MCF 10A (cell line): ENCODE measurements at regions of chr9 and their contacts with region 1.

Region 1: GRCh38 chr9:85715587-85715986 is 26.2 kb downstream of the AGTPBP1 start:
- DNase-seq: peak; percentile 1
- H3K4me3 Mint-ChIP-seq: no peak overlapping the region
- H3K27ac Mint-ChIP-seq: no peak overlapping the region
- H3K4me1 Mint-ChIP-seq: peaks cover 7% of the 10 kb centered on the region
- H3K27me3 Mint-ChIP-seq: no peaks in the 10 kb centered on the region
- CTCF ChIP-seq: no peak

Region 2: DNA sequence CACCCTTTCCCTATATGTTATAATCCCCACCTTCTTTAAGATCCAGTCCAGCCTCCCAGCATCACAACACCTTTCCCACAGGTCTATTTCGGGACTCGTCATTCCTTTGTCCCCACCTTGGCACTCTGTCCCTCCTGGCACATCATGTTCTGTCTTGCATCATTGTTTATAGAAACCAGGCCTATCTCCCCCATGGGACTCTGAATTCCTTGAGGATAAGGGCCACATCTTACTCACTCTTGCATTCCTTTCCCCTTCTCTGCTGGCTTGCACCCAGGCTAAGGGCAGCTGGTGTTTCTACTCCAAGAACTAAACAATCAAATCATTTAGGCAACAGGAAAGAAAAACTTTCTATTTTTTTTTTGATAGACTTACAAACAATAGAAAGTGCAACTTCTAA is 179.5 kb before region 1 on chr9:
- CTCF ChIA-PET with region 1: no interaction called
- POLR2A ChIA-PET with region 1: no interaction called
- intact Hi-C with region 1: no loop called
- DNase-seq: peak; percentile 87
- H3K4me3 Mint-ChIP-seq: no peak overlapping the region
- H3K27ac Mint-ChIP-seq: peak overlapping the region; percentile 26
- H3K4me1 Mint-ChIP-seq: peaks cover 11% of the 10 kb centered on the region
- H3K27me3 Mint-ChIP-seq: no peaks in the 10 kb centered on the region
- CTCF ChIP-seq: no peak

Region 3: DNA sequence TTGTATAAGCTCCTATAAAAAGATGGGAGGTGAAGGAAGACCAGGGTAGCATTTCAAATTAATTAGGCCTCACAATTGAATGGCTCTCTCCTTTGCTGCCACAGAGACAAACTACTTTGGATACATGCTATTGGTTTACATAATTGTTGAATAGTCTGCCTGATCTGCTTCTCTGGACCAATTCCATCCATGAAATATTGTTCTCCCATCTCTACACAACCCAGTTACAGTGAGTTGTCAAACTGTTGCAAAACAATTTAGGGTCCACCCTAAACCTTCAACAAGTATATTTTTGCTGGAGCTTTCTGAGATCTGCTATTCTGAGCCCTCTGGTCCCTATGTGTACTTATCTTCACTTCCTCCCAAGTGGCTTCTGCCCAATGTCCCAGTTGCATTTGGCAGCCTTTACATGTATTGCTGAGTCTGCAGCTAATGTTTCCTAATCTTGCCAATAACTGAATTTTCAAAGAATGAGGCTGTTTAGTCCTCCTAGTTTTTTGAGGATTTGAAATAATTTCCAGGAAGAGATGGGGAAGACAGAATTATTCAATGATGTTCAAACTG is 12.8 kb before region 1 on chr9:
- CTCF ChIA-PET with region 1: interaction called, 11 read pairs
- POLR2A ChIA-PET with region 1: no interaction called
- intact Hi-C with region 1: no loop called
- DNase-seq: no peak
- H3K4me3 Mint-ChIP-seq: no peak overlapping the region
- H3K27ac Mint-ChIP-seq: no peak overlapping the region
- H3K4me1 Mint-ChIP-seq: no peaks in the 10 kb centered on the region
- H3K27me3 Mint-ChIP-seq: no peaks in the 10 kb centered on the region
- CTCF ChIP-seq: no peak